Right cardiac atrium (tissue), 5 donors: ENCODE measurements at regions of chr2 and their contacts with region 1.

Region 1: GRCh38 chr2:238263204-238264071 is 23.6 kb upstream of the HES6 start:
- DNase-seq: peak; percentile 93 to 97 (median 96)
- ATAC-seq: peak; percentile 84 to 87
- H3K4me3 ChIP-seq: no peak overlapping the region
- H3K27ac ChIP-seq: peak overlapping the region; percentile 40
- H3K4me1 ChIP-seq: peaks cover 2% of the 10 kb centered on the region
- H3K27me3 ChIP-seq: no peaks in the 10 kb centered on the region

Region 2: GRCh38 chr2:237858294-237859081 is 404.9 kb before region 1 on chr2:
- intact Hi-C with region 1: loop called in 2 of 4 experiments (anchors 2 to 10 kb)
- DNase-seq: peak; percentile 62 to 82 (median 82)
- ATAC-seq: peak; percentile 83 to 90
- H3K4me3 ChIP-seq: no peak overlapping the region
- H3K27ac ChIP-seq: no peak overlapping the region
- H3K4me1 ChIP-seq: no peaks in the 10 kb centered on the region
- H3K27me3 ChIP-seq: no peaks in the 10 kb centered on the region

Region 3: GRCh38 chr2:238127317-238128200 is 135.9 kb before region 1 on chr2:
- intact Hi-C with region 1: loop called in 1 of 4 experiments (anchors 10 kb)
- DNase-seq: peak; percentile 45 to 81 (median 73)
- ATAC-seq: peak; percentile 65 to 66
- H3K4me3 ChIP-seq: no peak overlapping the region
- H3K27ac ChIP-seq: no peak overlapping the region
- H3K4me1 ChIP-seq: no peaks in the 10 kb centered on the region
- H3K27me3 ChIP-seq: no peaks in the 10 kb centered on the region

Region 4: DNA sequence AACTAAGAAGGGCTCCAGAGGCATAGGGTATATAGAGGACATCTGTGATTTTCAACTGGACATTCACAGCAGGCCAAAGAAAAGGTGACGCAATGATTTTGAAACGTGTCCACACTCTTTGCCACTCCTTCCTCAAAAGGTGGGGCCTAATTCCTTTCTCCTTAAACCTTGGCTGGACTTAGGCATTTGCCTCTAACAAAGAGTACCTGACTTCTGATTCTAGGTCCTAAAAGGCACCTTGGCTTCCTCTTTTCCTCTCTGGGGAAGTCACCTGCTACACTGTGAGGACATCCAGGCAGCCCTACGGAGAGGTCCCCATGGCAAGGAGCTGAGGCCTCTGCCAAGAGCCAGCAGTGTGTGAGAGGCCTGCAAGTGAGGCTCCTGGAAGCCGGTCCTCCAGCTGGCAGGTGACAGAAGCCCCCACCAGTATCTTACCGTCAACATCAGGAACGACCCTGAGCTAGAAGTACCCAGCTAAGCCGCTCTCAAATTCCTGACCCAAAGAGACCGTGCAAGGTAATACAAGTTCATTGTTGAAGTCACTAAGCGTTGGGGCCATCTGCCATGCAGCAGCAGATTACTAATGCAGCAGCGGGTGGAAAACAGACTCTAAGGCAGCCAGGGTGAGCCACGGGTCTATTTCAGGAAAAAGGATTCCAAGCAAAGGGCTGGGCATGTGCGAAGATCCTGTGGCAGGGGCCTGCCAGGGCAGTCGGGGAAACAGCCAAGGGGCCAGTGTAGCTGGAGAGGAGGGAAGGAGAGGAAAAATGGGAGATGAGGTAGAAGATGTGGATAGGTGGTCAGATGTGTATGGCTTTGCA is 16.2 kb before region 1 on chr2:
- intact Hi-C with region 1: no loop called
- DNase-seq: peak in 1 of 3 donors; percentile 28
- ATAC-seq: no peak
- H3K4me3 ChIP-seq: no peak overlapping the region
- H3K27ac ChIP-seq: no peak overlapping the region
- H3K4me1 ChIP-seq: peaks cover 6% of the 10 kb centered on the region
- H3K27me3 ChIP-seq: no peaks in the 10 kb centered on the region